PC-9 (cell line): ENCODE measurements at regions of chr12 and their contacts with region 1.

Region 1: GRCh38 chr12:69553627-69554248 is 31.5 kb upstream of the CCT2 start:
- DNase-seq: peak in 1 of 2 experiments; percentile 15
- H3K4me3 ChIP-seq: no peak overlapping the region
- H3K27ac ChIP-seq: no peak overlapping the region
- H3K4me1 ChIP-seq: 0 out of 2 replicates have a peak, but pooled peaks cover 4% of the 10 kb centered on the region
- H3K27me3 ChIP-seq: no peaks in the 10 kb centered on the region
- CTCF ChIP-seq: no peak

Region 2: DNA sequence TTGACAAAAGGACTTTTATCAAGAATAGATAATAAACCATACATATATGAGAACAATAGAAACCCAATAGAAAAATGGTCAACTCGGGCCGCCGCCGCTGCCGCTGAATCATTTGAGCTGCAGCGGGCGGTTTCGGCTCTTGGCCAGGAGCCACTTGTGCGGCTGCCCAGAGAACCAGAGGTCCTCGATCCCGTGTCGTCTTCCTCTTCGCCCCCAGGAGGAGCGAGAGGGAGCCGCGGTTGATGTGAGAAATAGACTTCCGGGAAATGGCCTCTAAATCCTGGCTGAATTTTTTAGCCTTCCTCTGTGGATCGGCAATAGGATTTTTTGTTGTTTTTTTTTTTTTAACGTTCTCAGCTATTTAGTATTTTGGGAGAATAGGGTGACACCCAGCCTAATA is 269.6 kb before region 1 on chr12:
- CTCF ChIA-PET with region 1: no interaction called
- POLR2A ChIA-PET with region 1: interaction called, 13 read pairs
- intact Hi-C with region 1: no loop called
- DNase-seq: peak; percentile 43 to 62
- H3K4me3 ChIP-seq: peak overlapping the region; percentile 47; the same call in 1 of the 2 replicates
- H3K27ac ChIP-seq: no peak overlapping the region
- H3K4me1 ChIP-seq: peaks cover 8% of the 10 kb centered on the region
- H3K27me3 ChIP-seq: no peaks in the 10 kb centered on the region
- CTCF ChIP-seq: no peak

Region 3: GRCh38 chr12:69388371-69388770 is 165.4 kb before region 1 on chr12:
- CTCF ChIA-PET with region 1: no interaction called
- POLR2A ChIA-PET with region 1: interaction called, 12 read pairs
- intact Hi-C with region 1: no loop called
- DNase-seq: peak in 1 of 2 experiments; percentile 43
- H3K4me3 ChIP-seq: no peak overlapping the region
- H3K27ac ChIP-seq: no peak overlapping the region
- H3K4me1 ChIP-seq: no peaks in the 10 kb centered on the region
- H3K27me3 ChIP-seq: no peaks in the 10 kb centered on the region
- CTCF ChIP-seq: peak; percentile 75

Region 4: DNA sequence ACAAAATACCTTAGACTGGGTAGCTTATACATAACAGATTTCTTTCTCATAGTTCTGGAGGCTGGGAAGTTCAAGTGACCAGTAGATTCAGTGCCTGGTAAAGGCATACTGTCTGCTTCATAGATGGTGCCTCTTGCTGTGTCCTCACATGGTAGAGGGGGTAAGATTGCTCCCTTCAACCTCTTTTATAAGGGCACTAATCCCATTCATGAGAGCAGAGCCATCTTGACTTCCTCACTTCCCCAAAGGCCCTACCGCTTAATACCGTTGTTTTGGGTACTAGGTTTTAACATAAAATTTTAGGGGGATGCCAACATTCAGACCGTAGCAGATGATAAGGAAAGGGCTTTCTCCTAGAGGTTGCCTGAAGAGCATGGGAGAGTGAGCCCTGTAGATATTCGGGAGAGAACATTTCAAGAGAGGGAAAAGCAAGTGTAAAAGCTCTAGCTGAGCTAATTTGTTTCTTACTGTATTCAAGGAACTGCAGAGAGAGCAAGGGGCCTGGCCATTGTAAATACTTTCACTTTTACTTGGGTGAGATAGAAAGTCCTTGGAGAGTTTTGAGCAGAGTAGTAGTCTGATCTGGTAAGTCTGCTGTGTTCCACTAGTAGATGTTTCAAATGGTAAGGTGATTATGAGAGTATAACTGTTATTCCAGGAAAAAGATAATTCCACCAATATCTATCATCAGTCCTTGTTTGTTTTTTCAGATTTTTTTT is 56.3 kb before region 1 on chr12:
- CTCF ChIA-PET with region 1: interaction called, 4 read pairs
- POLR2A ChIA-PET with region 1: interaction called, 10 read pairs
- intact Hi-C with region 1: no loop called
- DNase-seq: no peak
- H3K4me3 ChIP-seq: no peak overlapping the region
- H3K27ac ChIP-seq: no peak overlapping the region
- H3K4me1 ChIP-seq: peaks cover 8% of the 10 kb centered on the region; the same call in 1 of the 2 replicates
- H3K27me3 ChIP-seq: no peaks in the 10 kb centered on the region
- CTCF ChIP-seq: no peak